Activated T-helper 1 cell treated with anti-CD3 and anti-CD28 coated beads, Interleukin-12 subunit alpha, Interleukin-12 subunit beta, Interleukin-2, Interleukin-4 antibody, amounts not matched to agents 30 ng/mL and 10 ng/mL and 1 ng/mL, durations not matched to agents 14 hours and 24 hours and 36 hours (primary cell): ENCODE measurements at regions of chr1 and their contacts with region 1.

Region 1: DNA sequence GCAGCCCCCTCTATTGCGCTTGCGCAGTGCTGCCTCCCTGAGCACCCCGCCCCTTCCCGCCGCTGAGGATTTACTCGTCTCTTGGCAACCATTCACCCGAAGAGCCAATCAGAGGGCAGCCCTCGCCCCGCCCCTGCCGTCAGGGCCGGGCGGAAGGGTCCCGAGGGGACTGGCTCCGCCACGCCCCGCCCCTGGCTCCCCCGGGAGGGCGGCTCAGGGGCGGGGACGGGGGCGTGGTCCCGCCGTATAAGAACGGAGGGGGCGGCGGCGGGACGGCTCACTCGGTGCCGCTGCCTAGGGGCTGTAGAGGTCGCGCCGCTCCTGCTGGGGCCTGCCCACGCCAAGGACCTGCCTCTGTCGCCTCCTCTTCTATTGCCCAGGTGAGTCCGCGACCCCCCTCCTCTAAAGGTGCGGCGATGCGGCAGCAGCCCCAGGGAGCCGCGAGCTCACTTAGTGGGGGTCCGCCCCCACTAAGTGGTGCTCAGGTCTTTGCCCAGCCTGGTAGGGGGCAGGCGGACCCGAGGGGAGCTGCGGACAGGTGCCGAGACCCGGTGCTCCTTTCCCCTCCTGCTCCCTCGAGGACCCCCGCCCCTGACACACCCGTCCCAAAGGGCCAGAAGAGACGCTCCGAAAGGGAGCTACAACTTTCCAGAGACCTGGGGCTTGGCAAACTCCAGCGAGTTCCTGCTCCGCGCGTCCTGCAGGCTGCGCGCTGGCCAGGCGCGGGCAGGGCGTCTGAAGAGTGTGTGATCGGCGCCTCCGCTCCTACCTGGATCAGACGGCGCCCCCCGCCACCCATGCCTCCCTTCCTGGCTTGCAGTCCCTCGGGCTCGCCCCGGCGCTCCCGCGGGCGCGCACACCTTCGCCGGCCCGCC is at the start of gene TENT5C:
- DNase-seq: peak; percentile 98
- H3K4me3 Mint-ChIP-seq: peak within 1 kb of the TSS; percentile 91
- H3K27ac Mint-ChIP-seq: peak within 1 kb of the TSS; percentile 80
- H3K4me1 Mint-ChIP-seq: peaks cover 56% of the 10 kb centered on the region
- H3K27me3 Mint-ChIP-seq: peaks cover 26% of the 10 kb centered on the region
- total RNA-seq, gene TENT5C: 4.9 and 5.2 TPM in 2 replicates

Region 2: DNA sequence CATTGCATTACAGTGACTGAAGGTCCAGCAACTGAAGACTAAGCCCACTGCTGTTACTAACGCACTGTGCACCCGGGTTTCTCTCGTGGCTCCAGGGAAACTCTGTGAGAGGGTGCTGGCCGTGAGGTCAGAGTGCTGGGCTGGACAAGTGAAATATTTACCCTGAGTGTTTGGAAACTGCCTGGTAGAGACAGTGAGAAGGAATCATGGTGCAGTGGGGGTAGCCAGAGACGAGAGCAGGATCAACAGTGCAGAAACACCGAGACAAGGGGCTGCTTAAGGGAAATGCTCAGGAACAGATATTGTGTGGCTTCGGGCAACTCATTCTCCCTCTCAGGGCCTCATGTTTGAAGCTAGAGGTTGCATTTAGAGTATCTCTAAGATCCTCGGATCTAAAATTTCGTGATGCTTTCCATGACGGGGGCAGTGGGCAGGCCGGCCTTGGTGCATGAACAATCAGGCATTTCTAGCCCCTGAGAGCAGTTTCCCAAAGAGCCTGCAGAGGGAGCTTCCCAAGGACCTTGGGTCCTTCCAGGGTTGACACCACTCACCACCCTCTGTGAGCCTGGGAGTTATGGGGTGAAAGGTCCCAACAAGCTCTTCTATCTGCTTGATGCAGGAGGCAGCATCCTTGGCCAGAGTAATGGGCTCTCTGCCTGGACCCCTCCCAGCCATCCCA is 842.1 kb before region 1 on chr1:
- intact Hi-C with region 1: loop called (anchors 10 kb)
- DNase-seq: peak; percentile 50
- H3K4me3 Mint-ChIP-seq: peak overlapping the region; percentile 84
- H3K27ac Mint-ChIP-seq: peak overlapping the region; percentile 100
- H3K4me1 Mint-ChIP-seq: peaks cover 95% of the 10 kb centered on the region
- H3K27me3 Mint-ChIP-seq: peaks cover 3% of the 10 kb centered on the region

Region 3: DNA sequence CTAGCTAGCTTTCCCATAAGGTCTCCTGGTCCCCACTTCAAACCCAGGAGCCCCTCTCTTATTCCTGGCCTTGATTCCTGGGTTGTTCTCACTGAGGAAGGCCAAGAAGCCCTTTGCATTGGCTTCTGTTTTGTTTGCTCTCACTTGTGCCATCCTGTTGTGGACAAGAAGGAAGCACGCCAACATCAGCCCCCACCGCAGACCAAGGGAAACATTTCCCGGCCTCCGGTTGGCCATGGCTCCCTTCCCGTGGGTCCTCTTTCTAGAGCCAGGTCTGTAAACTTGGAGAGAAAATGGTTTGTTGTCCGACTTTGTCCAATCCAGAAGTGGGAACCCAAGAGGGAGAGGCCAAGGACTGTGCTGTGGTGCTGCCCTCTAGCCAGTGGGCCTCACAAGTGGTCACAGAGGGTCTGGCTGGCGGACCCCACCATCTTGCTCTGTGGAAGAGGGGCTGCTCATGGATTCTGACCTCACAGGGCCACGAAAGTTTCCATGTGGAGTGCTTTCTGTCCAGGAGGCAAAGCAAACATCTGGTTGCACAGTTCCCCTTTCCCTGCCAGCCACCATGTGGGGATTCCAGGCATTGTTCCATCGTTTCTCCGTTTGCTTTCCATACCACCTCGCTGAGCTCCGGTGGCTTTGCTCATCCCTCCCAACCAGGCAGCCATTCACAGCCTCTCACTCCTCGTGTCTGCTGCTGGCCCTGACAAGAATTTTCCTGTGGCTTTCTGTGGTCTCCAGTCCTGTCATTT is 19.1 kb before region 1 on chr1:
- intact Hi-C with region 1: no loop called
- DNase-seq: no peak
- H3K4me3 Mint-ChIP-seq: no peak overlapping the region
- H3K27ac Mint-ChIP-seq: no peak overlapping the region
- H3K4me1 Mint-ChIP-seq: no peaks in the 10 kb centered on the region
- H3K27me3 Mint-ChIP-seq: peaks cover 15% of the 10 kb centered on the region

Region 4: GRCh38 chr1:117618450-117619122 is 12.6 kb after region 1 on chr1:
- intact Hi-C with region 1: loop called (anchors 1 kb)
- DNase-seq: no peak
- H3K4me3 Mint-ChIP-seq: no peak overlapping the region
- H3K27ac Mint-ChIP-seq: no peak overlapping the region
- H3K4me1 Mint-ChIP-seq: peaks cover 61% of the 10 kb centered on the region
- H3K27me3 Mint-ChIP-seq: peaks cover 3% of the 10 kb centered on the region

Region 5: DNA sequence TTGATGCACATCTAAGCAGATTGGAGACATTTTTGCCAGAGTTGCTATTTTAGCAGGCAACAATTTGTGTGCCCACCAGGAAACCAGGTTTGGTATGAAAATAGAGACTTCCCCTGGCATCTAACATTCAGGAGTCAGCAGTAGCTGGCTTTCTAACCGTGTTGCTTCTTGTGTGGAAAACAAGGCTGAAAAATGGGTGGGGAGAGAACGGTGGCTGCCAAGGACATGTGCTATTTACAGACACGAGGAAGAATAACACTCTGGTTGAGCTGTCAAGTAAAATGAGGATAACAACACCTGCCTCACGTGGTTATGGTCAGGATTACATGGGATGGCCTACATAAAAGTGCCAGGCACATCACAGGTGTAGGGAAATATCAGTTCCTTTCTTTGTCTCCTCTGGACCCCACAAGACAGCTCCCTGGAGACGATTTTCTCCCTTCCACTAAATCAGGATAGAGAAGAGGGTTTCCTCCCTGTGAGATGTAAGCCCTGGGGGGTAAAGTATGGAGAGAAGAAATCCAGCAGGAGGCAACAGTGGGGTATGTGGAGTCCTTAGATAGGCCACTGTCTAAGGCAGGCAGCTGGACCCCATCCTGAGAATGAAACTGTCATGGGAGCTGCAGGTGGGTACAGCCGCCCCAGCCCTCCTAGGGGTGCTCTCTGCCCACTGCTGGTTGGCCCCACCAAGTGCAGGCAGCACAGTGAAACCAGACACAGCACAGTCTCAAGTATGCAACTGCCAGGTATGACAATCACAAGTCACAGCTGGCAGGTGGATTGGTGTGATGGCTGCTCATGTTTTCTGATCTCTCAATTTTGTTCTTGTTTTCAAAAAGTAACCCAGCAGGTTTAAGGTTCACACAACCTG is 80.2 kb after region 1 on chr1:
- intact Hi-C with region 1: no loop called
- DNase-seq: no peak
- H3K4me3 Mint-ChIP-seq: no peak overlapping the region
- H3K27ac Mint-ChIP-seq: no peak overlapping the region
- H3K4me1 Mint-ChIP-seq: no peaks in the 10 kb centered on the region
- H3K27me3 Mint-ChIP-seq: peaks cover 21% of the 10 kb centered on the region

Region 6: DNA sequence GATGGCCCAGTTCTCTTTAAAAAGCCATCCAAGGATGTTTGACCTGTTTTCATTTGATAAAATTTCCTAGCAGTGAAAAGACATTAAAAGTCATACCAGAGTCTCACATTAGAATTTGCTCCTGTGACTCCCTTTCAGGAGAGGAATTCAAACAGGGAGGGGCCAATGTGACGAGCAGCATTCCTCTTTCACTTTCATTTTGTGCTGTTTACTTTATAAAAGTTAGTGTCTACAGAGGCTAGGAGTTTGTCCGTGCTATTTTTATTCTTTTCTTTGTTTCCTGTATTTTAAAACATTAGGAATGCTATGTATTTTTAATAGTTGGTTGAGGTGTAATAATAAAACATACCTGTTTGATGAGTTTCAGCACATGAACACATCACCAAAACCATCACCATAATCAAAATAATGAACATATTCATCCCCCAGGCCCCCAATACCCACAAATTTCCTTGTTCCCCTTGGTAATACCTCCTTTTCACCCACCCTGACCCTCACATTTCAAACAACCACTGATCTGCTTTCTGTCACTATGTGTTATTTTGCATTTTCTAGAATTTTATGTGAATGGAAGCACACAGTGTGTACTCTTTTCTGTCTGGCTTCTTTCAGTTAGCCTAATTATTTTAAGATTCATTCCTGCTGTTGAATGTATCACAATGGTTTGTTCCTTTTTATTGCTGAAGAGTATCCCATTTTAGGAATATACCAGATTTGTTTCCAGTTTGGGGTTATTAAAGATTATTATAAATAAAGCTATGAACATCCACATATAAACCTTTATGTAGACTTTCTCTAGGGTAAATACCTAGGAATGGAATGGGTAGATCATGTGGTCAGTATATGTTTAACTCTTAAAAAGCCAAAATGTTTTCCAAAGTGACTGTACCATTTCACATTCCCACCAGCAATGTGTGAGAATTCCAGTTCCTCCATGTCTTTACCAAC is 129.3 kb after region 1 on chr1:
- intact Hi-C with region 1: loop called (anchors 2 kb)
- DNase-seq: peak; percentile 35
- H3K4me3 Mint-ChIP-seq: peak overlapping the region; percentile 65
- H3K27ac Mint-ChIP-seq: peak overlapping the region; percentile 60
- H3K4me1 Mint-ChIP-seq: peaks cover 14% of the 10 kb centered on the region
- H3K27me3 Mint-ChIP-seq: peaks cover 12% of the 10 kb centered on the region

Region 7: DNA sequence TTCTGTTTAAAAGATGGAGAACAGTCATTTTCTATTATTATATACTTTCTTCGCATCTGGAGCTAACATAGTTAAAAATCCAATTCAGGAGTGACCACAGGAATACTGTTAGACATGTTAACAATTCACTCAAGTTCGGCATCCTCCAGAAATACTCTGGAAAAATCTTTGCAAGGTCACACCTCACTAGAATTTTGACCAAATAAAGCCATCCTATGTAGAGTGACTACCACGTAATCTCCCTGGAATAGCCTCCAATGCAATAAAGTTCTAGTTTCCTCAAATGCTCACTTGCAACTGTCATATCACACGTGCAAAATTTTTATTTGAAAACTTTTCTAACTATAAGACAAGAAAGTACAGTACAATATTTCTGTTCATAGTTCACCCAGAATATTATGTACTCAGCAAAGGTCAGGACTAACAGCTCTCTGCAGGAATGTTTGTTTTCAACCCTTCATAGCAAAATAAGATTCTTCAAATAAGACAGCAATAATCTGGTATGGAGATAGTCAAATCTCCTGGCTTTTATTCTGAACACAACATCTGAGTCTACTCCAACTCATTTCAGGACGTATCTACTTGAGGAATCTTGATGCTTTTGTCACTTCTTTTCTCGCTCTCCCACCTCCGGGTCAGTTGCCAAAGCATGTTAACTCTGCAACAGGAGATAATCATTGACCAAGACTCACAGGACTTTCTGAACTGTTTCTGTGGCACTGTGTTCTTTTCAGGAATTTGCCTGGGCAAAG is 240.8 kb after region 1 on chr1:
- intact Hi-C with region 1: no loop called
- DNase-seq: no peak
- H3K4me3 Mint-ChIP-seq: no peak overlapping the region
- H3K27ac Mint-ChIP-seq: no peak overlapping the region
- H3K4me1 Mint-ChIP-seq: no peaks in the 10 kb centered on the region
- H3K27me3 Mint-ChIP-seq: peaks cover 3% of the 10 kb centered on the region

Region 8: DNA sequence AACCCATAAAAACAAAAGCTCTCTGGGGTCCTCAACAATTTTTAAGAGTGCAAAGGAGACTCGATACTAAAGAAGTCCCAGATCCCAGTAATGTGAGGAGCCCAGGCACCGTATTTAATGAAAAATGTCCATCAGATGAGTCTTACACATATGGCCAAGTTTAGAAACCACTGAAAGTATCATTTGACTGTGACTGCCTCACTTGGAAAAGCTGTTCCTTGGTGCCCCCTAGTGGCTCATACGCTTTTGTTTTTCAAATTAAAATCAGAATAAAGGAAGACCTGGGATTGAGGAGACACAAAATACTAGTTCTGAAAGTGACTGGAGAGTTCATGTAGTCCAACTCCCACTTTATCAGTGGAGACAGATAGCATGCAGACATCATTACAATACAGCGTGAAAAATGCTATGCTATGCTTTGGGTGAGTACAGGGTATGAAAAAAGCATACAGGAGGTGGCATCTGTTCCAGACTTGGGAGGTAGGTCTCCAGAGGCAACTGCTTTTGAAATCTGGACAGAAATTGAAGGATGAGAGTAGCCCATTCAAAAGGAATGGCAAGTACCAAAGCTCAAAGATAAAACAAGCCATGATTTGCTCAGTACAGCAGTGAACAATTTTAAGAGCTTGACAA is 289.6 kb after region 1 on chr1:
- intact Hi-C with region 1: loop called (anchors 10 kb)
- DNase-seq: peak; percentile 32
- H3K4me3 Mint-ChIP-seq: no peak overlapping the region
- H3K27ac Mint-ChIP-seq: no peak overlapping the region
- H3K4me1 Mint-ChIP-seq: peaks cover 7% of the 10 kb centered on the region
- H3K27me3 Mint-ChIP-seq: no peaks in the 10 kb centered on the region